Left cardiac atrium (tissue), 4 donors: ENCODE measurements at regions of chr3 and their contacts with region 1.

Region 1: GRCh38 chr3:37210230-37210629 is 35.8 kb upstream of the LRRFIP2 start:
- DNase-seq: no peak
- ATAC-seq: peak; percentile 52 to 79

Region 2: GRCh38 chr3:37024092-37024491 is 186.1 kb before region 1 on chr3:
- intact Hi-C with region 1: loop called in 1 of 2 experiments (anchors 5 kb)
- DNase-seq: no peak
- ATAC-seq: no peak

Region 3: DNA sequence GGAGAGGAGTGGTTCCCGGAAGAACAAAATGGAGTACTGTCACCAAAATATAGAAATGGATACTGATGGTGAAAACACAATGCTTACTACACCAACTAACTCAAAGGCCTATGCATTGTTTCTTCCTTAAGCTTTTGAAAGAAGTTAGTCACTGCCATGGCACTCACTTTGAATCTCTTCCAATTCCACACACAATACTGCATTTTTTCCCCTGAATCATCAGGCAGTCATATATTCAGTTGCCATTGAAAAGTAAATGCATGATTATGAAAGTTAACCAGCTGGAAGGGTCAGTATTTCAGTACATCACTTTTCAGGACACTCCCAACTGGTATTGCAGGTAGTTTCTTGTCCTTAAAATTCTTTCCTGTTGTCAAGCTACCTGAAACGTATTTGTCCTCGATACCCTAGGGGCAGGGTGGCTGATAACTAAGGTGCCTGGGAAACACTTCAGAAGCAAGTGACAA is 26.8 kb before region 1 on chr3:
- intact Hi-C with region 1: no loop called
- DNase-seq: no peak
- ATAC-seq: peak in 1 of 2 donors; percentile 59